Heart right ventricle (tissue), 16 donors: ENCODE measurements at regions of chr16 and their contacts with region 1.

Region 1: GRCh38 chr16:71853413-71853812 is 7.6 kb downstream of the ATXN1L start:
- DNase-seq: no peak
- ATAC-seq: no peak
- H3K4me3 ChIP-seq: no peak overlapping the region
- H3K27ac ChIP-seq: peak overlapping the region in 3 of 10 donors; percentile 65 to 79 (median 72)
- H3K4me1 ChIP-seq: peaks cover 0 to 60% (median 18%) of the 10 kb centered on the region in 9 donors
- H3K27me3 ChIP-seq: no peaks in the 10 kb centered on the region
- CTCF ChIP-seq: no peak

Region 2: DNA sequence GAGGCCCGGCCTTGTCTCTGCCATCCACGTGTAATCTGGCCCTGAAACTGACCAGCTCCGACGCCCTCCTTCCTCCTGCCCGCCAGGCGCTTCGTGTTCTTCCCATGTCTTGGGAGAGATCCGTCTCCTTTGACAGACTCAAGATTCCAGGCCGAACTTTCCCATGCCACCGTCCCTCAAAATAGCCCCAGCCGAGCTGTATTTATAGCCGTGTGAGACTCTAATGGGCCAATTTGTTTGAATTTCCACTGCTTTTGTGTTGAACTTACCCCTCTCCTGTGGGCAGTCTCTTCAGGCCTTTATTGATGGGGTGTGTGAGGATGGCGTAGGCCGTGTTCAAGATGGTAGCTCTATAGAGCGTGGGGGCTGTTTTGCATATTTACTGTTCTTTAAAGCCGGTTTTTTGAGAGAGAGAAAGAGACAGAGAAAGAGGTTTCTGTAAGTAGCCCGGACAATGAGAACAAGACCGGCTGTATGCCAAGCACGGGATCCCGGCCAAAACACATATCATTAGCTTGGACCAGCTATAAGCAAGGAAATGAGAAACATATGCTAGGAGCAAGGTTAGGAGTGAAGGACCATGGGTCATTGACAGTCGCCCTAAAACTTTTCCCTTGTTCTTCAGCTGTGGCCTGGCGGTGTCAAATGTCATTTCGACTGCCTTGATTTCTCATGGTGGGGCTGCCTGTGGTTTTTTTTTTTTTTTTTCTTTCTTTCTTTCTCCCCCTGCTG is 1319.0 kb after region 1 on chr16:
- intact Hi-C with region 1: loop called in 1 of 10 experiments (anchors 10 kb)
- DNase-seq: peak; percentile 82 to 86
- ATAC-seq: peak; percentile 68 to 87 (median 78)
- H3K4me3 ChIP-seq: peak overlapping the region in 1 of 10 donors; percentile 1
- H3K27ac ChIP-seq: peak overlapping the region; percentile 41 to 86 (median 70)
- H3K4me1 ChIP-seq: peaks cover 0 to 42% (median 16%) of the 10 kb centered on the region in 9 donors
- H3K27me3 ChIP-seq: no peaks in the 10 kb centered on the region
- CTCF ChIP-seq: peak in 8 of 9 donors; percentile 5 to 50 (median 36)